Tibial artery (tissue), 4 donors: ENCODE measurements at regions of chr9 and their contacts with region 1.

Region 1: GRCh38 chr9:28782630-28783029 is 1209.3 kb upstream of the C9orf72 start:
- DNase-seq: no peak
- H3K4me3 ChIP-seq: no peak overlapping the region
- H3K27ac ChIP-seq: no peak overlapping the region
- H3K4me1 ChIP-seq: no peaks in the 10 kb centered on the region
- H3K27me3 ChIP-seq: no peaks in the 10 kb centered on the region
- CTCF ChIP-seq: no peak

Region 2: GRCh38 chr9:27817747-27818146 is 964.9 kb before region 1 on chr9:
- intact Hi-C with region 1: loop called (anchors 10 kb)
- DNase-seq: no peak
- H3K4me3 ChIP-seq: no peak overlapping the region
- H3K27ac ChIP-seq: no peak overlapping the region
- H3K4me1 ChIP-seq: no peaks in the 10 kb centered on the region
- H3K27me3 ChIP-seq: no peaks in the 10 kb centered on the region
- CTCF ChIP-seq: no peak